ENCODE measurements at regions of chr14 and their contacts with region 1.

Region 1: GRCh38 chr14:28766469-28767238 is at the start of gene FOXG1:
- DNase-seq: peak in 1 of 3 donors; percentile 33
- H3K4me3 ChIP-seq: peak within 1 kb of the TSS in 3 of 7 experiments; percentile 36 to 63 (median 40)
- H3K27ac ChIP-seq: no peak within 1 kb of the TSS
- H3K4me1 ChIP-seq: peaks cover 0 to 6% (median 3%) of the 10 kb centered on the region in 4 experiments
- H3K27me3 ChIP-seq: peaks cover 38 to 89% (median 62%) of the 10 kb centered on the region in 5 experiments

Region 2: DNA sequence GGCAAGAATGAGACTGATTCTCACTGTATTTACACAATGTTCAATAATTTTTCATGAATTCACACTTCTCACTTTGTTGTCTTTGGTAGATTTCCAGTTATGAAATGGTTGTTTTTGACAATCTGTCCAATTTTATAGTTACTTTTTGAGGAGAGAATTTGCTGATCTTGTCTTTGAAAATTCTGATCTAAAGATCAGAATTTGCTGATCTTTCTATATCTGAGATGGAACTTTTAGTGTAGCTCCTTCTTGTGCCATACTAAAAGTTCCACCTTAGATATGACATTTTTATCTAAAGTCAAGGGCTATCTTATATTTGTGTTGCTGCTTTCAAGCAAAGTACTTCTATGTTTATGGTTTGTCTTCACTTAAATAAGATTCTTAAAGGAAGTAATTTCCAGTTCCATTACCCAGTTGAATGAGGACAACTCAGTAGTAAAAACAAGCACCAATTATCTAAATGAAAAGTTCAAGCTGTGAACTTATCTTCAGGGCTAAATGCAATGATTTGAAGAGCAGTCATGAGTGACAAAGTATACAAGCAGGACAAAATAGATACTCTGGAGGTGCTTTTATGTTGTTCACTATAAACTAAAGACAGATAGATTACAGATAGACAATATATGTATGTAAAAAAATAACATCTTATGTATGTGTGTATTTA is 76.5 kb before region 1 on chr14:
- CTCF ChIA-PET with region 1: no interaction called
- POLR2A ChIA-PET with region 1: no interaction called
- DNase-seq: no peak
- H3K4me3 ChIP-seq: no peak overlapping the region
- H3K27ac ChIP-seq: no peak overlapping the region
- H3K4me1 ChIP-seq: no peaks in the 10 kb centered on the region
- H3K27me3 ChIP-seq: no peaks in the 10 kb centered on the region

Region 3: GRCh38 chr14:28754209-28754985 is 12.3 kb before region 1 on chr14:
- CTCF ChIA-PET with region 1: interaction called, 10 read pairs
- POLR2A ChIA-PET with region 1: no interaction called
- DNase-seq: peak in 2 of 3 donors; percentile 51 to 54
- H3K4me3 ChIP-seq: no peak overlapping the region
- H3K27ac ChIP-seq: no peak overlapping the region
- H3K4me1 ChIP-seq: peaks cover 0 to 2% (median 0%) of the 10 kb centered on the region in 4 experiments
- H3K27me3 ChIP-seq: peaks cover 16 to 75% (median 45%) of the 10 kb centered on the region in 5 experiments

Measured in common myeloid progenitor, CD34-positive (primary cell).